Activated CD8-positive, alpha-beta T cell treated with anti-CD3 and anti-CD28 coated beads, Interleukin-2, amount 10 ng/mL, durations not matched to agents 7 days and 5 days (primary cell): ENCODE measurements at regions of chr5 and their contacts with region 1.

Region 1: DNA sequence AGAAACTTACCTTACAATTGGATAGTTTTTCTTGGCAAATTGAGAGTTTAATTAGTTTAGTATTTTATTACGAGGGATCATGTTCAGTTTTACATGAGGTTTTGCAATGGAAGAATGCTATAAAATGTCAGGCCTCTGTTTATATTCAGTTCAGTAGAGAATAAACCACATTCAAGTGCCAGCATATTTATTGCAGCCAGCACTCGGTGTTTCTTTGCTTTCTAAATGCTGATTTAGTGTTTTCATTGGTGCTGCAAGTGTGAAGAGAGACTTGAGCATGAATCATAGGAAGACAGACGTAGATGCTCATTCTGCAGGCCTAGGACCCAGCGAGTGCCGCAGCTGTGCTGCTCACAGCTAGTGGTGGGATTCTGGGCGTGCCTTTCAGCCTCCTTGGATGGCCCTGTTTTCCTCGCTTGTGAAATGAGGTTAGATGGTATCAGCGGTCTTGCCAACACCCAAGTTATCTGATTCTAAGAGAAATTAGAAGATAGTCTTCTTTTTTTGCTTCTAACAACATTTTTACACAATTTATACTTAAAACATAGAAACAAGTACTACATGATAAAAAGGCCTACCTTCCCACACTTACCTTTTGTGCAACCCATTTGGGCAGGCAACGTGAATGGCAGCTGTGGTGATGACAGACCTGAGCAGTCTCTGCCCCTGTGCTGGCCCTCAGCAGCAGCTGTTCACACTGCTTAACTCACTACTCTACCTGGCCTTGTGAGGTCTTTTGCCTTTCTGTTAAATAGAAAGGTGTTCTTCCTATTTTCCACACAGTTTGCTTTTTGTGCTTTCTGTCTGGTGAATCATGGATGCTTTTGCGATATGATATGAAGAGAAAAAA is 26.8 kb upstream of the TNFAIP8 start:
- DNase-seq: peak; percentile 72
- ATAC-seq: peak; percentile 62
- H3K4me3 Mint-ChIP-seq: peak overlapping the region; percentile 45
- H3K27ac Mint-ChIP-seq: peak overlapping the region; percentile 95
- H3K4me1 Mint-ChIP-seq: peaks cover 82% of the 10 kb centered on the region
- H3K27me3 Mint-ChIP-seq: no peaks in the 10 kb centered on the region

Region 2: DNA sequence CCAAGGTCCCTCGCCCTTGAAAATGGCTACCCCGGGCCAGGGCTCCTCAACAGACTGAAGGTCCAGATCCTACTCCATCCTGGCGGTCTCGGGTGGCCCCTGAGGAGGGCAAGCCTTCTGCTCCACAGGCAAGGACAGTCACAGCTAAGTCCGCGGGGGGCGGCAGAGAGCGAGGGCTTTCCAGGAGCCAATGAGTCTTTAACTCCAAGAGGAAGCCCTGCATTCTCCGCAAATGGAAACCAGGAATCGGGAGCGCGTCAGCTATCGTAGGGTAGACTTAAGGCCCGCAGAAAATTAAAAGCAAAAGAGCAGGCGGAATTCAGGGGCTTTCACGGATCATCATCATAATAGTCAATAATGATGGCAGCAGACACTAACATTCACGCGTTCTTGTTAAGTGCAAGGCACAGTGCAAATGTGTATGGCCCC is 61.0 kb before region 1 on chr5:
- CTCF ChIA-PET with region 1: interaction called, 5 read pairs
- POLR2A ChIA-PET with region 1: interaction called, 11 read pairs
- DNase-seq: peak; percentile 94
- ATAC-seq: peak; percentile 70
- H3K4me3 Mint-ChIP-seq: peak overlapping the region; percentile 98
- H3K27ac Mint-ChIP-seq: peak overlapping the region; percentile 96
- H3K4me1 Mint-ChIP-seq: peaks cover 56% of the 10 kb centered on the region
- H3K27me3 Mint-ChIP-seq: no peaks in the 10 kb centered on the region

Region 3: GRCh38 chr5:119302916-119303897 is 25.8 kb before region 1 on chr5:
- CTCF ChIA-PET with region 1: interaction called, 274 read pairs
- POLR2A ChIA-PET with region 1: interaction called, 4 read pairs
- DNase-seq: peak; percentile 19
- ATAC-seq: peak; percentile 44
- H3K4me3 Mint-ChIP-seq: no peak overlapping the region
- H3K27ac Mint-ChIP-seq: peak overlapping the region; percentile 73
- H3K4me1 Mint-ChIP-seq: peaks cover 95% of the 10 kb centered on the region
- H3K27me3 Mint-ChIP-seq: no peaks in the 10 kb centered on the region

Region 4: GRCh38 chr5:119355685-119356611 is 27.0 kb after region 1 on chr5 and contains the start of gene TNFAIP8:
- CTCF ChIA-PET with region 1: interaction called, 21 read pairs
- POLR2A ChIA-PET with region 1: interaction called, 280 read pairs
- DNase-seq: peak; percentile 53
- ATAC-seq: peak; percentile 69
- H3K4me3 Mint-ChIP-seq: peak within 1 kb of the TSS; percentile 83
- H3K27ac Mint-ChIP-seq: peak within 1 kb of the TSS; percentile 88
- H3K4me1 Mint-ChIP-seq: peaks cover 88% of the 10 kb centered on the region
- H3K27me3 Mint-ChIP-seq: no peaks in the 10 kb centered on the region
- total RNA-seq, gene TNFAIP8: 123 to 127 TPM

Region 5: GRCh38 chr5:119626086-119626485 is 297.1 kb after region 1 on chr5:
- CTCF ChIA-PET with region 1: no interaction called
- POLR2A ChIA-PET with region 1: no interaction called
- DNase-seq: no peak
- ATAC-seq: no peak
- H3K4me3 Mint-ChIP-seq: no peak overlapping the region
- H3K27ac Mint-ChIP-seq: no peak overlapping the region
- H3K4me1 Mint-ChIP-seq: no peaks in the 10 kb centered on the region
- H3K27me3 Mint-ChIP-seq: peaks cover 4% of the 10 kb centered on the region